ENCODE measurements at regions of chr7 and their contacts with region 1.

Region 1: DNA sequence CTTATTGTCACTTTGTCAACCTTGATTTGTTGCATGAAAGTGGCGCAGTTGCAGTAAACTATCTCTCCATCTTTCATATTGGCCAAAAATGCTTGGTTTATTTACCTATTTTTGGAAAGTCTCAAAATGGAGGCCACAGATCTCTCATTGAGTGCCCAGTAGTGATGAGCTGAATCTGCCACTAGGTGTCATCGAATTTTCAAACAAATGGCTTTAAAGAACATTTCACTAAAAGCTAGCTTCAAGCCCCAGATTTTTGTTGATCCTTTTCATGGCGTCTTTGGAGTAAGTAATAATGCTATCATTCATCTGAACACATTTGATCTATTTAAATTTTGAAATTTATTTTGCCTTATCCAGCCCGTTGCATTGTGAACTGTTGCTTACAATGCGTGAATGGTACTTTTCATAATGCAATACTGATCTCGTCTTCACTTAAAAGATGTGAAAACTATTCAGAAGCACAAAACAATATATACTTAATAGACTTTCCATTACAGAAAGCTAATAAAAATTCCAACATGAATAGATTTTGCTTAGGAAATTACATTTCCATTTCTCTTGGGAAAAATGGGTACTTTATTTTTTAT is 236.2 kb downstream of the DNAJB9 start:
- DNase-seq: no peak
- H3K4me3 ChIP-seq: no peak overlapping the region
- H3K27ac ChIP-seq: no peak overlapping the region
- H3K4me1 ChIP-seq: no peaks in the 10 kb centered on the region
- H3K27me3 ChIP-seq: no peaks in the 10 kb centered on the region
- CTCF ChIP-seq: peak in 1 of 3 donors; percentile 26
- POLR2A ChIP-seq: no peak

Region 2: GRCh38 chr7:108253275-108254044 is 552.4 kb before region 1 on chr7:
- intact Hi-C with region 1: no loop called
- DNase-seq: no peak
- H3K4me3 ChIP-seq: no peak overlapping the region
- H3K27ac ChIP-seq: no peak overlapping the region
- H3K4me1 ChIP-seq: no peaks in the 10 kb centered on the region
- H3K27me3 ChIP-seq: no peaks in the 10 kb centered on the region
- CTCF ChIP-seq: no peak
- POLR2A ChIP-seq: no peak

Region 3: DNA sequence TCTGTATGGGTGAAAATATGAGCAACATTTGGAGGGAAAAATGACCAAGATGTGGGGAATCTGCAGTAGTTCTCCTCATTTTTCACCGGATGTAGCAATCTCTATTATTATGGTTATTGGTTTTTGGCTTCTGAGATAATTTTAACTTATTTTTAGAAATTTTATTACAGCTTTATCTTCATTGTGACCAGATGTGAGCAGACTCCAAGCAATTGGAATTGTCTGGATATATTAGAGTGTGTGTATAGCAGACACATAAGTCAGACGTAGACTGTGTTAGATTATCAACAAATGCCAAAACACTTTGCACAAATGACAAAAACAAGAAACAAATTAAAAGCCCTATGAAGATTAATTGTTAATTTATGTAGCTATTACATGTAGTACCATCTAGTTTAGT is 12.8 kb after region 1 on chr7:
- intact Hi-C with region 1: loop called (anchors 1 kb)
- DNase-seq: no peak
- H3K4me3 ChIP-seq: no peak overlapping the region
- H3K27ac ChIP-seq: no peak overlapping the region
- H3K4me1 ChIP-seq: no peaks in the 10 kb centered on the region
- H3K27me3 ChIP-seq: no peaks in the 10 kb centered on the region
- CTCF ChIP-seq: no peak
- POLR2A ChIP-seq: no peak

Region 4: GRCh38 chr7:109126404-109127050 is 320.6 kb after region 1 on chr7:
- intact Hi-C with region 1: no loop called
- DNase-seq: no peak
- H3K4me3 ChIP-seq: no peak overlapping the region
- H3K27ac ChIP-seq: no peak overlapping the region
- H3K4me1 ChIP-seq: no peaks in the 10 kb centered on the region
- H3K27me3 ChIP-seq: no peaks in the 10 kb centered on the region
- CTCF ChIP-seq: no peak
- POLR2A ChIP-seq: no peak